ENCODE measurements at regions of chr14 and their contacts with region 1.

Region 1: DNA sequence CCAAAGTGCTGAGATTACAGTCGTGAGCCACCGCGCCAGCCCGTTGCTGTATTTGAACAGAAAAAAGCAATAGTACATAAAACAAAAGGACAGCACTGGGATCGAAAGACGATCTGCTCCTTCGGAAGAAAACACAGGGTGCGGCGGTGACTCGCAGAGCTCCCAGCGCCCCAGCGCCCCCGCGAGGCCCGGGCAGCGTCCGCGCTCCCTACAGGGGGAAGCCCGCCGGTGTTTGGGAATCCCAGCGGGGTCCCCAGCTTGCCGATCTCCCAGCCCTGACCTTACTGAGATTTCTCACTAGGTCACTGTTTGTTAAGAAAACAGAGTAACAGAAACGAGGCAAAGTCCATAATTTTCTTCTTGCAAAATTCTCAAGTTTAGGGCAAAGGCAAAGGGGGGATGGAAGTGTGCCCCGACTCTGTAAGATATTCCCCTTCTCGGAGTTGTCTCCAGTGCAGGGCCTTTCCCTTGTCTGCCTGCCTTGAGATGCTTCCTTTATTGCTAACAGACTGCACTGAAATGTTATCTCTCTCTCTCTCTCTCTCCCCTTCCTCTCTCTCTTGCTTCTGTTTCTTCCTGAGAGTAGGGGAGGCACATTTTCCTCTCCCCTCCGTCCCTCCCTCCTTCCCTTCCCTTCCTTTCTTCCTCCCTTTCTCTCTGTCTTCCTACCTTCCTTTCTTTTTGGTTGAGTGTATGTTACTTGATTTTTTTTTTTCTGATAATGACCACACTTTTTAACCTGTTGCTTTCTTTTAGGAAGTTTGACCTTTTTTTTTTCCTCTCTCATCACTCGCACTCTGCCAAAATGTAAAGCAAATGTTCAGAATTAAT is 91.9 kb downstream of the TMEM30B start:
- DNase-seq: peak; percentile 64 to 78
- ATAC-seq: peak; percentile 67 to 75
- H3K4me3 ChIP-seq: peak overlapping the region; percentile 47 to 64 (median 58)
- H3K27ac ChIP-seq: peak overlapping the region; percentile 79 to 94 (median 91)
- H3K4me1 ChIP-seq: peaks cover 39 to 55% of the 10 kb centered on the region in 2 donors
- H3K27me3 ChIP-seq: no peaks in the 10 kb centered on the region
- CTCF ChIP-seq: peak in 4 of 5 experiments; percentile 51 to 73 (median 70)
- POLR2A ChIP-seq: peak in 1 of 2 donors; percentile 8

Region 2: GRCh38 chr14:60628892-60629291 is 560.3 kb before region 1 on chr14:
- in situ Hi-C with region 1: no loop called
- intact Hi-C with region 1: loop called (anchors 5 kb)
- DNase-seq: no peak
- ATAC-seq: no peak
- H3K4me3 ChIP-seq: no peak overlapping the region
- H3K27ac ChIP-seq: peak overlapping the region in 1 of 4 donors; percentile 10
- H3K4me1 ChIP-seq: peaks cover 0 to 5% of the 10 kb centered on the region in 2 donors
- H3K27me3 ChIP-seq: no peaks in the 10 kb centered on the region
- CTCF ChIP-seq: no peak
- POLR2A ChIP-seq: no peak

Region 3: DNA sequence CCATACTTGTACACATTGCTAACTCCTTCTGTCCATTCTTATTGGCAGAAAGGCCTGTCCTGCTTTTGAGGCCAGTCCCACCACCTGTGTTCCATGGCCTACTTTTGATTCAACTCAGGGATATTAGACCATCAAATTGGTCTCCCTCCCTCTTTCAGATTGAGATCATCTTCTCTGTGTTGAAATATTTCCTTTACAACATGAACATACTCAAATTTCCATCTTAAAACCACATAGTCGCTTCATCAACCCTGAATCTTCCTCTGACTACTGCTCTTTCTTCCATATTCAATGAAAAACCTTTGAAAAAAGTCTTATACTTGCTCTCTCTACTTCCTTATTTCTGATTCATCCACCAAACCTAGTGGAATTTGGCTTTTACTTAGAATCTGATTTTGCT is 243.2 kb before region 1 on chr14:
- in situ Hi-C with region 1: no loop called
- intact Hi-C with region 1: loop called (anchors 10 kb)
- DNase-seq: no peak
- ATAC-seq: peak; percentile 51 to 64
- H3K4me3 ChIP-seq: peak overlapping the region in 1 of 4 donors; percentile 1
- H3K27ac ChIP-seq: peak overlapping the region; percentile 56 to 75 (median 66)
- H3K4me1 ChIP-seq: peaks cover 56 to 59% of the 10 kb centered on the region in 2 donors
- H3K27me3 ChIP-seq: no peaks in the 10 kb centered on the region
- CTCF ChIP-seq: no peak
- POLR2A ChIP-seq: no peak

Region 4: DNA sequence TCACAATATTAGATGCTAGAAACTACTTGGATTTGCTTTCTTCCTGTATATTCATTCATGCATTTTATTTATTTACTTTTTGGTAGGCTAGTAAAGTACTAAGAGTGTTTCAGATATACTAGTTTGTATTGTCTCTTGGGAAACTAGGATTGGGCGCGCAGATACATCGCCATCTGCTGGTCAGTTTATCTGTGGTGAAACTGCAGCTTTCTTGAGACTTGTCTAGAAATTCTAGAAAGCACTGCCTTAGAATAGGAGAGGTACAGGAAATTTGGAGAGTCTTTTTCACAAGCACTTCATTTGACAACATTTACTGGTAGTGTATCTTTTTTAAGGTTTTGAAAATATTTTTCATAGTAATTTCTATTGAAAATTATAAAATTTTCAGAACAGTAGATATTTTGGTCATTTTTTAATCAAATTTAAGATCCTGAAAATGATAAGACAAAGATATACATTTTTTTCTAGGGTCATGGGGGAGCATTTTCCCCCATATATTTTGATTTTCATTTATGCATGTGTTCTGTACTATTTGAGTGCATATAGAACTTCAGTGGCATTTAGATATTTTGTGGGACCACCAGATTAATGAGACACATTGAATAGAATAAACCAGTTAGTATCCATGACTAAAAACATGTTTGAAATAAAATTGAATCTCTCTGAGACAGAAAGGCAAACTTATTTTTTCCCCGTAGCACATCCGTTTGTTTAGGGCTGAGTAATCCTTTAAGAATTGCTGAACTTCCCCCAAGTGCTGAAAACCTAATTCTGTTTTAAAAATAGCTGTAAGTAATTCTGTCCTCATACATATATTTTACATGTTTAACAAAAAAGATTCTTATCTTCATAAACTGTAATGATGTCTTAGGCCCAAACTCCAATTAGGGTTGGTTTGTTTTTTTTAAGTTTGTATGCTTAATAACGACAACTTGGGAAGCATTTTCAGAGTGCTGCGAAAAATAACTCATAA is 163.7 kb before region 1 on chr14:
- in situ Hi-C with region 1: loop called in 2 of 4 experiments (anchors 5 to 25 kb)
- intact Hi-C with region 1: loop called (anchors 5 kb)
- DNase-seq: peak; percentile 32 to 62
- ATAC-seq: peak; percentile 84 to 87
- H3K4me3 ChIP-seq: no peak overlapping the region
- H3K27ac ChIP-seq: no peak overlapping the region
- H3K4me1 ChIP-seq: peaks cover 10 to 12% of the 10 kb centered on the region in 2 donors
- H3K27me3 ChIP-seq: no peaks in the 10 kb centered on the region
- CTCF ChIP-seq: peak; percentile 72 to 90 (median 87)
- POLR2A ChIP-seq: no peak

Region 5: DNA sequence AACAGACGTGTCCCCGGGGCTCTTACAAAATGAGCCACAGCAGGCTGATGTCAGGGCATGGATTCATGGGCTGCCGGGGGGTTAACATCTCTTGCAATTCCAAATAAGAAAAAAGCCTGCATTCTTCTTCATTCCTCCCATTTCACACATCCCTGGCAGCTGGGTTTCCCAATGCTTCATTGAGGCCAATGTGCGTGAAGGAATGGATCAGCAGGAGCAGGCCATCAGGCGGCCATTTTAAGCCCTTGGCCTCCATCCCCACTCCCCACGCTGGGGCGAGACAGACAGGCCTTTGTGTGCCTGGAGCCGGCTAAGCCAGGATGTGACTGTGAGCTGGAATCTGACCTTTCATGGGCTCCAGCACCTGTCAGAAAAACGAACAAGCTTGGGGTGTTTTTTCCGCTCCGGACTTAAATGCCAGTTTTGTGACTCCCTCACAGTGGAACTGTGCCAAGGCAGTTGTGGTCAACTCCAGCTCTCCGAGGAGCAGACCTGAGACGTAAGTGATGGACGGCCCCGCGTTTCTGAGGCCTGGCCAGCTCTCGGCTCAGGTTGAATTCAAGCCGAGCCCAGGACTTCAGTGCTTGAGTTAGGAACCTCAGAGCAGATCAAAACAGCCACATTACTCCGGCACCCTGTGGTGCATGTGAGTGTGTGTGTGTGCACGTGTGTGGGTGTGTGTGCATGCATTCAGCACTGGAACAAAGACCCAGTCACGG is 41.2 kb before region 1 on chr14:
- in situ Hi-C with region 1: no loop called
- intact Hi-C with region 1: loop called (anchors 2 kb)
- DNase-seq: peak; percentile 77 to 89
- ATAC-seq: peak; percentile 44 to 65
- H3K4me3 ChIP-seq: peak overlapping the region in 3 of 4 donors; percentile 3 to 27 (median 16)
- H3K27ac ChIP-seq: peak overlapping the region; percentile 84 to 95 (median 88)
- H3K4me1 ChIP-seq: peaks cover 35 to 43% of the 10 kb centered on the region in 2 donors
- H3K27me3 ChIP-seq: no peaks in the 10 kb centered on the region
- CTCF ChIP-seq: no peak
- POLR2A ChIP-seq: no peak

Region 6: GRCh38 chr14:61213191-61213621 is 24.0 kb after region 1 on chr14:
- in situ Hi-C with region 1: no loop called
- intact Hi-C with region 1: no loop called
- DNase-seq: no peak
- ATAC-seq: peak in 1 of 2 donors; percentile 19
- H3K4me3 ChIP-seq: no peak overlapping the region
- H3K27ac ChIP-seq: peak overlapping the region; percentile 12 to 78 (median 60)
- H3K4me1 ChIP-seq: peaks cover 33 to 34% of the 10 kb centered on the region in 2 donors
- H3K27me3 ChIP-seq: no peaks in the 10 kb centered on the region
- CTCF ChIP-seq: no peak
- POLR2A ChIP-seq: no peak

Measured in gastrocnemius medialis (tissue), 4 donors.